CD8-positive, alpha-beta T cell (primary cell): ENCODE measurements at regions of chr15 and their contacts with region 1.

Region 1: DNA sequence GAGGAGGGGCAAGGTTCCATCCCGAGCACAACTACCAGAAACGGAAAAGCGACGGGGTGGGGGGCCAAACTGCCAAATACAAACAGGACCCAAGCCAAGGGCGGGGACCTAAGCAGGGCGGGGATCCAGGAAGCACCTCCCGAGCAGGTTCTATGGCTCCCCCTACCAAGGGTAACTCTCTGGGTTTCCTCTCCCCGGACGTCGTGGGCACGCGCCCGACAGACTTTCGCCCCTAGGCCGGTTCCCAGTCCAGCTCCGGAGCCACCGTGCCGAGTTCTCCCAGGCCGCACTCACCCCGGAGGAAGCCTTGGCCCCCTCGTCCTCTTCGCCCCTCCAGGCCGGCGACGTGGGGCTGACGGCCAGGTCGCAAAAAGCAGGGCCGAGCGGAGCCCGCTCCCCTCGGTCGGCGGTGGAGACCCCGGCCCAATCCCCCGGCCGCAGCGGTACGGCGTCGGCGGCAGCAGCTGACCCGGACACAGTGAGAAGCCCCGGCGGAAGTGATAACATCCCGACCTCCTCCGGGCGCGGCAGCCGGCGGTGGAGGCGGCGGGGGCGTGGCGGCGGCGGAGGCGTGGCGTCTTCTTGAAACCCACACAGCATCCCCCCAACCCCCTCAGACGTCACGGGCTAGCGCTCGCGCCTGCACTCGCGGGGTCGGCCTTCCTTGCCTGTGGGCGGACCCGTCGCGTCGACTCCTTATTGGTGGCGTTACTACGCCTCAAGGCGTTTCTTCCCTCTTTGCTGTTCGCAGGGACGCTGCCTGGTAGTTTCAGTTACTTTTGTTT is at the start of gene BNIP2:
- DNase-seq: peak; percentile 99 to 100 (median 100)
- ATAC-seq: peak; percentile 88
- H3K4me3 ChIP-seq: peak within 1 kb of the TSS; percentile 81 to 98
- H3K4me3 Mint-ChIP-seq: peak within 1 kb of the TSS; percentile 93
- H3K27ac ChIP-seq: peak within 1 kb of the TSS; percentile 98 to 100
- H3K27ac Mint-ChIP-seq: peak within 1 kb of the TSS; percentile 96
- H3K4me1 ChIP-seq: peaks cover 33% of the 10 kb centered on the region
- H3K4me1 Mint-ChIP-seq: peaks cover 46% of the 10 kb centered on the region
- H3K27me3 ChIP-seq: no peaks in the 10 kb centered on the region
- H3K27me3 Mint-ChIP-seq: no peaks in the 10 kb centered on the region
- CTCF ChIP-seq: no peak
- total RNA-seq, gene BNIP2: 107 to 114 TPM

Region 2: GRCh38 chr15:58933281-58934113 is 755.5 kb before region 1 on chr15 and contains the start of gene SLTM:
- CTCF ChIA-PET with region 1: no interaction called
- POLR2A ChIA-PET with region 1: interaction called, 9 read pairs
- intact Hi-C with region 1: loop called (anchors 2 to 5 kb)
- DNase-seq: peak; percentile 87 to 98 (median 94)
- ATAC-seq: peak; percentile 92
- H3K4me3 ChIP-seq: peak within 1 kb of the TSS; percentile 83 to 84
- H3K4me3 Mint-ChIP-seq: peak within 1 kb of the TSS; percentile 99
- H3K27ac ChIP-seq: peak within 1 kb of the TSS; percentile 96
- H3K27ac Mint-ChIP-seq: peak within 1 kb of the TSS; percentile 100
- H3K4me1 ChIP-seq: peaks cover 22% of the 10 kb centered on the region
- H3K4me1 Mint-ChIP-seq: peaks cover 35% of the 10 kb centered on the region
- H3K27me3 ChIP-seq: no peaks in the 10 kb centered on the region
- H3K27me3 Mint-ChIP-seq: no peaks in the 10 kb centered on the region
- CTCF ChIP-seq: peak; percentile 30
- total RNA-seq, gene SLTM: 189 to 201 TPM

Region 3: DNA sequence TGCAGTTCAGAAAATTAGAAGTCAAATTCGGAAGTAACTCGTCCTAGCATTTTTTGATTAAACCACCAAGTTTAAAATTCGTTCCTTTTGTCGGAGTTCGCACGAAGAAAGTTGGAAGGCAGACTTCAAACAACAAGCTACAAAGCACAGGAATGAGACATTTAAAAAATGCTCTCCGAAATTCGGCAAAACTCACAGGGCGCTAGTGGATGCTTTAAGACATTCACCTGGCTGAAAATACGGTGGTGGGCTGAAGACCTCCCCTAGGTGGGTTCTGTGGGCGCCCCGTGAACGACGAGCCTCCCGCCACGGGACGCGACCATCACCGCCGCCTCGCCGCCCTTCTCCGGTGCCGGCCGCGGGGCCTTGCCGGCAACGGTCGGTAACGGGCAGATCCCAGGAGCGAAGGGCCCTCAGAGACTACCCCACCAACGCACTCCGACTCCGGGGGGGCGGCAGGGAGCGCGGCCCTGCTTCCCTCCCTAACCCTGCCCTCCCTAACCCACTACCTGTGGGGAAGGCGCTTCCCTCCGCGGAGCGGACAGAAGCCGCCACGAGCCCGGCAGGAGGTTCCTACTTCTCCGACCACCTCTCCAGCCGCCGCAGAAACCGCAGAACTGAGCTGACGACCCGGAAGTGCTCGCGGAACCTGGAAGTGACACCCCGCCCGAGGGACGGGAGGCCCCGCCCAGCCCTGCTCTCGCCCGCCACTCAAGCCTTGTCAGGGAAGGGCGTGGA is 32.0 kb before region 1 on chr15 and contains the start of gene GTF2A2:
- CTCF ChIA-PET with region 1: interaction called, 5 read pairs
- POLR2A ChIA-PET with region 1: interaction called, 20 read pairs
- intact Hi-C with region 1: loop called (anchors 1 kb)
- DNase-seq: peak; percentile 82 to 96 (median 93)
- ATAC-seq: peak; percentile 99
- H3K4me3 ChIP-seq: peak within 1 kb of the TSS; percentile 82 to 85
- H3K4me3 Mint-ChIP-seq: peak within 1 kb of the TSS; percentile 51
- H3K27ac ChIP-seq: peak within 1 kb of the TSS; percentile 72 to 87
- H3K27ac Mint-ChIP-seq: peak within 1 kb of the TSS; percentile 83
- H3K4me1 ChIP-seq: peaks cover 24% of the 10 kb centered on the region
- H3K4me1 Mint-ChIP-seq: peaks cover 13% of the 10 kb centered on the region
- H3K27me3 ChIP-seq: no peaks in the 10 kb centered on the region
- H3K27me3 Mint-ChIP-seq: no peaks in the 10 kb centered on the region
- CTCF ChIP-seq: no peak
- total RNA-seq, gene GTF2A2: 62.7 to 63.6 TPM

Region 4: GRCh38 chr15:60006203-60006862 is 317.3 kb after region 1 on chr15:
- CTCF ChIA-PET with region 1: no interaction called
- POLR2A ChIA-PET with region 1: interaction called, 3 read pairs
- intact Hi-C with region 1: loop called in 1 of 2 experiments (anchors 10 kb)
- DNase-seq: peak in 8 of 9 experiments; percentile 43 to 71 (median 58)
- ATAC-seq: peak; percentile 69
- H3K4me3 ChIP-seq: peak overlapping the region; percentile 48 to 53
- H3K4me3 Mint-ChIP-seq: peak overlapping the region; percentile 83
- H3K27ac ChIP-seq: no peak overlapping the region
- H3K27ac Mint-ChIP-seq: peak overlapping the region; percentile 71
- H3K4me1 ChIP-seq: peaks cover 36% of the 10 kb centered on the region
- H3K4me1 Mint-ChIP-seq: peaks cover 33% of the 10 kb centered on the region
- H3K27me3 ChIP-seq: peaks cover 62 to 73% of the 10 kb centered on the region in 2 experiments
- H3K27me3 Mint-ChIP-seq: peaks cover 92% of the 10 kb centered on the region
- CTCF ChIP-seq: no peak

Region 5: DNA sequence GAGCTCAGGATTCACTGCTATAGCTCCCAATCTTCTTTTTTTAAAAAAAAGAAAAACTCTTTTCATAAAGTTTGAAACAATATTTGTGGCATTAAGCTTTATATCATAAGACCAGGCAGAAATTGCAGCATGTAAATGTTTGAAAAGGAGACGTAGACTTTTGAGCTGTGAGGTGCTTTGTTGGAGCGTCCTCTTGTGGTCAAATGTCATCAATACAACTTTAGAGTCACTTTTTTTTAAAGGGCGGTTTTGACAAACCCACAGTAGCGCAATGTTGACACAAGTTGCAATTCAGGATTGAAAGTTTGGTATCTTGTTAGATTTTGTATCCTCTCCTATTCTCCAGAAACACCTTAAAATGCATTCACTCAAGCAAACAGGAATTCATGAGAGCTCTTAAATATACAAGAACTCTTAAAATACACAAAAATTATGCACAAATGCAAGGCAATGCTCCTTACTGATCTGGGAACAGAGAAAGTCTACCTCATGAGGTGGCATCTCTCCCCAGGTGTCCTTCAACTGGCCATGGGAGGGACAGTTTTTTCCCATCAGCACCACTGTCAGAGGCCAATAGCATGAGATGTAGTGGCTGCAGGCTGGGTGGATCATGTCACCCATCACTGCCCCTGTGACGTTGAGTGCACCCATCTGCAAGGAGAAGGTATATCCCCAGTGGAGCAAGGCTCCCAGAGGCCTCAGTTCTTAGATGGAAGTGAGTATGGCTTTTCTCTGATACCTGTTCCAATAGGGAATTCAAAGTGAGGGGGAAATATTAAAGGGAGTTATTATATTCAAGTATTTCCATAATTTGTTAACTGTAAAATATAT is 638.0 kb after region 1 on chr15:
- CTCF ChIA-PET with region 1: interaction called, 5 read pairs
- POLR2A ChIA-PET with region 1: no interaction called
- intact Hi-C with region 1: loop called in 1 of 2 experiments (anchors 1 kb)
- DNase-seq: peak in 5 of 9 experiments; percentile 8 to 72 (median 32)
- ATAC-seq: peak; percentile 40
- H3K4me3 ChIP-seq: no peak overlapping the region
- H3K4me3 Mint-ChIP-seq: no peak overlapping the region
- H3K27ac ChIP-seq: no peak overlapping the region
- H3K27ac Mint-ChIP-seq: no peak overlapping the region
- H3K4me1 ChIP-seq: no peaks in the 10 kb centered on the region
- H3K4me1 Mint-ChIP-seq: peaks cover 2% of the 10 kb centered on the region
- H3K27me3 ChIP-seq: peaks cover 0 to 5% of the 10 kb centered on the region in 2 experiments
- H3K27me3 Mint-ChIP-seq: peaks cover 34% of the 10 kb centered on the region
- CTCF ChIP-seq: peak; percentile 73

Region 6: DNA sequence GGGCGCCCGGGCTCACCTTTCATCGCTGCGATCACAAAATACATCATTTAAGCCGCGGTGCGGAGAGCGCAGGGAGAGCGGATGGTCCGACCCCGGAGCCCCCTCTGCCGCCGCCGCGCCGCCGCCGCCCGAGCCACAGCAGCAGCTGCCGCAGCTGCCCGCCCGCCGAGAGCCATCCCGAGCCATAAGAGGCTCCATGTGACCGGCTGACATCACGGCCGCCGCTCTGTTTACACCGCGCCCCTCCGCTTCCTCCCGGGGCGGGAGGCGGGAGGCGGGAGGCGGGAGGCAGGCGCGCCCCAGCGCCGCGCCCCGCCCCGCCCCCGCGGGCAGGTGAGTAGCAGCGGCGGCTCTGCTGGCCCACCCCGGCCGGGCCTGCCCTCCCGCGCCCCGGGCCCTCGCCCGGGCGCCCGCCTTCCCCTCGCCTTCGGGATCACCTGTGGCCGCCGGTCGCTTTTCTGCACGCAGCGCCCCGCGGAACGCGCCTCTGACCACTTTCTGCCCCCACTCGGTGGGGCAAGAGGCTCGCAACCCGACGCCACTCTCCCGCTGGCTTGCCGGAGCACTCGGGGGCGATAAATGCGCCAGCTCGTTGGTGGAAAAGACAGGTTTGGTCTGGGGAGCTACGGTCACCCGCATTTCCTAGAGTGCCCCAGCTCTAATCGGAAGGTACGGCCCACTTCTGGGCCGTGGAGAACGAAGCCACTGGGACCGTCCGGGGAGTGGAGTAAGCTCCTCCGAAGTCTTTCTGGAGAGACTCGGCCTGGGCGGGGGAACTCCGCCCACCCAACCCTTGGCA is 903.5 kb after region 1 on chr15:
- CTCF ChIA-PET with region 1: no interaction called
- POLR2A ChIA-PET with region 1: no interaction called
- intact Hi-C with region 1: loop called in 1 of 2 experiments (anchors 5 kb)
- DNase-seq: peak; percentile 71 to 93 (median 87)
- ATAC-seq: peak; percentile 88
- H3K4me3 ChIP-seq: peak overlapping the region; percentile 71 to 81
- H3K4me3 Mint-ChIP-seq: peak overlapping the region; percentile 84
- H3K27ac ChIP-seq: peak overlapping the region; percentile 75 to 83
- H3K27ac Mint-ChIP-seq: peak overlapping the region; percentile 88
- H3K4me1 ChIP-seq: peaks cover 33% of the 10 kb centered on the region
- H3K4me1 Mint-ChIP-seq: peaks cover 35% of the 10 kb centered on the region
- H3K27me3 ChIP-seq: no peaks in the 10 kb centered on the region
- H3K27me3 Mint-ChIP-seq: no peaks in the 10 kb centered on the region
- CTCF ChIP-seq: no peak